Calu3 (cell line): ENCODE measurements at regions of chr4 and their contacts with region 1.

Region 1: GRCh38 chr4:87856816-87857215 is 24.0 kb downstream of the MEPE start:
- DNase-seq: no peak
- H3K4me3 Mint-ChIP-seq: no peak overlapping the region
- H3K27ac Mint-ChIP-seq: no peak overlapping the region
- H3K4me1 Mint-ChIP-seq: peaks cover 49% of the 10 kb centered on the region
- H3K27me3 Mint-ChIP-seq: no peaks in the 10 kb centered on the region
- CTCF ChIP-seq: no peak

Region 2: GRCh38 chr4:87895964-87896621 is 39.3 kb after region 1 on chr4:
- CTCF ChIA-PET with region 1: interaction called, 10 read pairs
- intact Hi-C with region 1: loop called (anchors 5 kb)
- DNase-seq: peak; percentile 55
- H3K4me3 Mint-ChIP-seq: peak overlapping the region; percentile 1
- H3K27ac Mint-ChIP-seq: peak overlapping the region; percentile 75
- H3K4me1 Mint-ChIP-seq: peaks cover 23% of the 10 kb centered on the region
- H3K27me3 Mint-ChIP-seq: no peaks in the 10 kb centered on the region
- CTCF ChIP-seq: no peak